AG04450 (cell line): ENCODE measurements at regions of chr12 and their contacts with region 1.

Region 1: GRCh38 chr12:42372154-42372791 is 46.3 kb downstream of the PPHLN1 start:
- DNase-seq: no peak
- H3K4me3 ChIP-seq: no peak overlapping the region
- H3K27ac ChIP-seq: no peak overlapping the region
- H3K27me3 ChIP-seq: no peaks in the 10 kb centered on the region
- CTCF ChIP-seq: peak; percentile 82

Region 2: DNA sequence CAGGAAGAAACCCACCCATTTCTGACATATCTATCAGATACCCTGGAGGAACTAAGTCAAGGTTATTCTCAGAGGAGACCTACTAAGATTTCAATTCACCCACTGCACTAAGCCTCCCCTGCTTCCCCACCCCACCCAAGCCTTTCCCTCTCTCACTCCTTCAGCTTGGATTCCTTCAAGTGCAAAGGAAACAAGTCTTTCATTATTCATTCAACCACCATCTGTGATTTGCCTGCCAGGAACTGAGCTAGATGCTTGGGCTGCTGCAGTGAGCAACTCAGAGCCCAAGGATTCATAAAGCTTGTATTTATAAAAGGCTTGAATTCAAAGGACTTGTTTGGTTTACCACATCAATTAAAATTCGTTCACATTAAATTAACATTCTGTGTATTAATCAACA is 388.9 kb before region 1 on chr12:
- CTCF ChIA-PET with region 1: no interaction called
- POLR2A ChIA-PET with region 1: no interaction called
- DNase-seq: no peak
- H3K4me3 ChIP-seq: no peak overlapping the region
- H3K27ac ChIP-seq: no peak overlapping the region
- H3K27me3 ChIP-seq: peaks cover 3% of the 10 kb centered on the region
- CTCF ChIP-seq: no peak

Region 3: GRCh38 chr12:42129595-42130204 is 242.6 kb before region 1 on chr12:
- CTCF ChIA-PET with region 1: interaction called, 27 read pairs
- POLR2A ChIA-PET with region 1: no interaction called
- DNase-seq: no peak
- H3K4me3 ChIP-seq: no peak overlapping the region
- H3K27ac ChIP-seq: no peak overlapping the region
- H3K27me3 ChIP-seq: no peaks in the 10 kb centered on the region
- CTCF ChIP-seq: peak; percentile 83

Region 4: GRCh38 chr12:42346403-42347002 is 25.8 kb before region 1 on chr12:
- CTCF ChIA-PET with region 1: interaction called, 22 read pairs
- POLR2A ChIA-PET with region 1: no interaction called
- DNase-seq: no peak
- H3K4me3 ChIP-seq: no peak overlapping the region
- H3K27ac ChIP-seq: no peak overlapping the region
- H3K27me3 ChIP-seq: no peaks in the 10 kb centered on the region
- CTCF ChIP-seq: no peak

Region 5: GRCh38 chr12:42396473-42397259 is 24.4 kb after region 1 on chr12:
- CTCF ChIA-PET with region 1: interaction called, 20 read pairs
- POLR2A ChIA-PET with region 1: no interaction called
- DNase-seq: no peak
- H3K4me3 ChIP-seq: no peak overlapping the region
- H3K27ac ChIP-seq: no peak overlapping the region
- H3K27me3 ChIP-seq: no peaks in the 10 kb centered on the region
- CTCF ChIP-seq: no peak

Region 6: DNA sequence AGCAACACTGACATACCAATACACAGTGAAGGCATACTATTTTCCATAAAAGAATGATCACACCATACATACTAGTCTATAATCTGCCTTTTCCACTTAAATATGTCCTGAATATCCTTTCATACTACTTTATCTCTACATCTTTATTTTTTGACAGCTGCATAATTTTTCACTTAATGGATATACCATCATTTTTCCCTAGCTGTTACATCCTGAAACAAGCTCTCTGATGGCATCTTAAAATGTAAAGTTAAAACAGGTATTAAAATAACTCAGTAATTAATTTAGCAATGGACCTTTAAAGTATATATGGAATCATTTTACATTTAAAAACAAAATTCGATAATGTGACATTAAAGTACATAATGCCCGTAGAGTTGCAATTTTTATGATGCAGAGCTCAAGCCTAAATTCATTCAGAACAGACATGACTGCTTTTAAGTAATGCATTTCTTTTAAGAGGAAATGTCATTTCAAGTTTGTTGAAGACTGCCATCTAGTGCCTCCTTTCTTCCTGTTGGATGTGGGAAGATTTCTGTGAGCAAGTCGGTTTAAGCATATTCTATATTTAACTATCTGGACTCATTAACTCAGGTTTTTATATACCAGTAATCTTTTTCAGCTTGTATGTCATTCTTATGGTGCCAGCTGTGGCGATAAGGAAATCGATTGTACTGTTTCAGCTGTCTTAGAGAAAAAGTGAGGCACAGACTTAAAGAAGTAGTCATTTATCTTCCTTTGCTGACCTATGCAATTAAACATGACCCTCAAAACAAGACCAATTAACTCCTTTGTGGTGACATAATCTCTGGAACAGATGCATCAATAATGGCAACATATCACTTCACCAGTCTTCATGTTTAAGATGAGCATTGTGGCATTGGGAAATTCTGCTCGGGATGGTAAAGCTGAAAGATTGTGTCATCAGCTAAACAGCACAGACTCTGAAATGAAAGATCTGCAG is 197.0 kb after region 1 on chr12:
- CTCF ChIA-PET with region 1: interaction called, 12 read pairs
- POLR2A ChIA-PET with region 1: no interaction called
- DNase-seq: no peak
- H3K4me3 ChIP-seq: no peak overlapping the region
- H3K27ac ChIP-seq: no peak overlapping the region
- H3K27me3 ChIP-seq: no peaks in the 10 kb centered on the region
- CTCF ChIP-seq: peak; percentile 66

Region 7: GRCh38 chr12:42612231-42612613 is 239.9 kb after region 1 on chr12:
- CTCF ChIA-PET with region 1: no interaction called
- POLR2A ChIA-PET with region 1: no interaction called
- DNase-seq: no peak
- H3K4me3 ChIP-seq: no peak overlapping the region
- H3K27ac ChIP-seq: no peak overlapping the region
- H3K27me3 ChIP-seq: no peaks in the 10 kb centered on the region
- CTCF ChIP-seq: no peak

Region 8: GRCh38 chr12:42846782-42847181 is 474.5 kb after region 1 on chr12:
- CTCF ChIA-PET with region 1: no interaction called
- POLR2A ChIA-PET with region 1: no interaction called
- DNase-seq: no peak
- H3K4me3 ChIP-seq: no peak overlapping the region
- H3K27ac ChIP-seq: no peak overlapping the region
- H3K27me3 ChIP-seq: no peaks in the 10 kb centered on the region
- CTCF ChIP-seq: no peak